Activated CD4-positive, alpha-beta T cell treated with anti-CD3 and anti-CD28 coated beads, Interleukin-2, amount 10 ng/mL, durations not matched to agents 24 days and 14 days (primary cell): ENCODE measurements at regions of chr16 and their contacts with region 1.

Region 1: DNA sequence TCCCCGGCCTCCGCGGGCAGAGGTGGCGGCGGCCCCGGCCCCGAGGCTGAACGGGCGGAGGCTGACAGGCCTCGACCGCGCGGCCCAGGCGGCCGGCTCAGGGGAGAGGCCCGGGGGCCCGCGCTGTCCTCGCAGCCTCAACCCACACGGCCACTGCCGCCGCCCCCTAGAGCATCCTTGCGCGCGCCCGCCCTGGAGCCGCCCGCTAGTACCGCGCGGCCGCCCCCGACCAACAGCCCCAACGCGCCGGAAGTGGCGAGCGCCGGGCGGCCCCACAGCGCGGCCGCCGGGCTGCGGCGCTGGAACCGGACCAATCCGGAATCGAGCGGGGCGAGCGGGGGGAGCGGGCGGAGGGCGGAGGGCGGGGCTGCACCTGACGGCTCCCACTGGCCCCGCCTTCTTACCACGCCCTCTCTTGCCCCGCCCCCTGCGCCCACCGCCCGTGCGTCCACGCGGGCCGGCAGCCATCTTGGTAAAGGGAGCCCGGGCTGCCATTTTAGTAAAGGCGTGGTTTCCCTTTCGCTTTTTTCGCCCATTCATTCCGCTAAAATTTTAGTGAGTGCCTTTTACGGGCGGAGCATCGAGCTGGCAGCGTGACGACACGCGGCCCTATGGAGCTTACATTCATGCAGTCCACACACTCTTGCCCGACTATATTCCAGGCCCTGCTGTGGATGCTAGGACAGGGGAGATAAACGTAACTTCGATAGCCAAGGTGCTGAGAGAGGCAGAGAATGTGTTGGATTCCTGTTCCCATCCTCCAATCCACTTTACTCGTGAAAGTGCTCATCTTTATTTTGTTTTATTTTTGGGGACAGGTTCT is at the start of gene XPO6:
- DNase-seq: peak; percentile 100
- H3K4me3 Mint-ChIP-seq: peak within 1 kb of the TSS; percentile 89
- H3K27ac Mint-ChIP-seq: peak within 1 kb of the TSS; percentile 95
- H3K4me1 Mint-ChIP-seq: peaks cover 24% of the 10 kb centered on the region
- H3K27me3 Mint-ChIP-seq: no peaks in the 10 kb centered on the region
- total RNA-seq, gene XPO6: 230 and 245 TPM in 2 replicates

Region 2: GRCh38 chr16:28140788-28141618 is 70.9 kb before region 1 on chr16:
- intact Hi-C with region 1: loop called (anchors 1 kb)
- DNase-seq: peak; percentile 92
- H3K4me3 Mint-ChIP-seq: peak overlapping the region; percentile 84
- H3K27ac Mint-ChIP-seq: peak overlapping the region; percentile 95
- H3K4me1 Mint-ChIP-seq: peaks cover 78% of the 10 kb centered on the region
- H3K27me3 Mint-ChIP-seq: no peaks in the 10 kb centered on the region

Region 3: DNA sequence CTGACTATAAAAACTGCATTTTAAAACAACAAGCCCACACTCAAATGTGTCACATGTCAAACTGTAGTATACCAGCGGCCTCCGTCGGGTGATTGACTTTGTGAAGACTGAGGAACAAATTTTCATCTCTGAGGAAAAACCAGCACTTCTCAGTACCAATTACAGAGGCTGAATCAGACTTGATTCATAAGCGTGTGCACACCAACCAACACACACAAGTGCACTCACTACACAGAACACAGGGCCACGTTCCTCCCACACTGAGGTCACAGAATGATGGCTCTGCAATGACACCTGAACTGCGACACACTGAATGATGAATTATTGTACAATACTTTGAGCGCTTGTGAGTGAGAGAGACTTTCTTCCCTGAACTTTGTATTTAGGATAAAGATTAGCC is 29.7 kb before region 1 on chr16:
- intact Hi-C with region 1: loop called (anchors 2 kb)
- DNase-seq: peak; percentile 75
- H3K4me3 Mint-ChIP-seq: peak overlapping the region; percentile 82
- H3K27ac Mint-ChIP-seq: peak overlapping the region; percentile 99
- H3K4me1 Mint-ChIP-seq: peaks cover 72% of the 10 kb centered on the region
- H3K27me3 Mint-ChIP-seq: no peaks in the 10 kb centered on the region

Region 4: DNA sequence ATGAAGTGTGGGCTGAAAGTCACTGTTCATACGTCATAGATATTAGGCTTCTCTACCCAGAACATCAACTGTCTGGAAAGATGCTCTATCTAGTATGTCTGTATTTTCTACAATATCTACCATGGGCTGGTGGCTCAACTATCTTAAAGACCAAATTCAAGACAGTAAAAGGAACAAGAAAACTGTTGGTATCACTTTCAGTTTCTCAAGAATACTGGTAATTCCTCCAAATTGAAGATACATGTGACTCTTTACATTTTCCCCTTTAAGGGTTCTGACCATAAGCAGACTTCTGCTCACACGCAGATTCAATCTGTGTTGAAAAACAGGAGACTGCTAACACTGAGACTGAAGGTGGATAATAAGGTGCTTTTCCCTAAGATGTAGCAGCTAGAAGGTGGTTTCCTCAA is 24.3 kb before region 1 on chr16:
- intact Hi-C with region 1: loop called (anchors 2 kb)
- DNase-seq: peak; percentile 79
- H3K4me3 Mint-ChIP-seq: peak overlapping the region; percentile 67
- H3K27ac Mint-ChIP-seq: peak overlapping the region; percentile 87
- H3K4me1 Mint-ChIP-seq: peaks cover 82% of the 10 kb centered on the region
- H3K27me3 Mint-ChIP-seq: no peaks in the 10 kb centered on the region

Region 5: GRCh38 chr16:28193530-28194423 is 18.1 kb before region 1 on chr16:
- intact Hi-C with region 1: loop called (anchors 1 kb)
- DNase-seq: peak; percentile 78
- H3K4me3 Mint-ChIP-seq: peak overlapping the region; percentile 87
- H3K27ac Mint-ChIP-seq: peak overlapping the region; percentile 96
- H3K4me1 Mint-ChIP-seq: peaks cover 75% of the 10 kb centered on the region
- H3K27me3 Mint-ChIP-seq: no peaks in the 10 kb centered on the region

Region 6: GRCh38 chr16:28250999-28251398 is 39.1 kb after region 1 on chr16:
- intact Hi-C with region 1: no loop called
- DNase-seq: no peak
- H3K4me3 Mint-ChIP-seq: no peak overlapping the region
- H3K27ac Mint-ChIP-seq: no peak overlapping the region
- H3K4me1 Mint-ChIP-seq: no peaks in the 10 kb centered on the region
- H3K27me3 Mint-ChIP-seq: peaks cover 8% of the 10 kb centered on the region

Region 7: DNA sequence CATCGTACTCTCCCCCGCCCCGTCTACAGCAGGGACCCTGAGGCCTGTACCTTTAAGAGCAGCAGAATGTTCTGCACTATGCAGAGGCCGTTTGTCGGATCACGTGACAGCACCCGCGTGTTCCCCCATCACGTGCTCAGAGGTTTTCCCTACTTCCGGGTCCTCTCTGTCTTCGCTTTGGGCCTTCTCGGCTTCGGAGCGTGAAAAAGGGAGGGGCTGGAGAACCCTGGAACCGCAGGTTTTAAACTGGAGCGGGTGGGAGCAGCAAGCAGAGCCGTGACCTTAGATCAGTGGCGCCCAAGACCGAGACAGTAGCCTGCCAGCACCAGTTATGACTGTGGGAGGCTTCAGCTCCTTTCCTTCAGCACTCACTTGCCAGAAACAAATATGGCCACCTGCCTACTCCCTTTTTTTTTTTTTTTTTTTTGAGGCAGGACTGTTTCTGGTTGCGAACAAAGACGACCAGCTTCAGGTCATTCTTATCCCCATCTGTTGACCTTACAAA is 280.1 kb after region 1 on chr16 and contains the start of gene CLN3:
- intact Hi-C with region 1: loop called (anchors 1 kb)
- DNase-seq: peak; percentile 96
- H3K4me3 Mint-ChIP-seq: peak within 1 kb of the TSS; percentile 97
- H3K27ac Mint-ChIP-seq: peak within 1 kb of the TSS; percentile 100
- H3K4me1 Mint-ChIP-seq: peaks cover 59% of the 10 kb centered on the region
- H3K27me3 Mint-ChIP-seq: no peaks in the 10 kb centered on the region
- total RNA-seq, gene CLN3: 26.1 and 27.7 TPM in 2 replicates

Region 8: GRCh38 chr16:28823872-28824716 is 612.2 kb after region 1 on chr16:
- intact Hi-C with region 1: loop called (anchors 5 kb)
- DNase-seq: peak; percentile 98
- H3K4me3 Mint-ChIP-seq: peak overlapping the region; percentile 100
- H3K27ac Mint-ChIP-seq: peak overlapping the region; percentile 100
- H3K4me1 Mint-ChIP-seq: peaks cover 47% of the 10 kb centered on the region
- H3K27me3 Mint-ChIP-seq: peaks cover 2% of the 10 kb centered on the region